Panc1 (cell line): ENCODE measurements at regions of chr11 and their contacts with region 1.

Region 1: GRCh38 chr11:64947208-64947814 is 11.6 kb upstream of the GPHA2 start:
- DNase-seq: no peak
- ATAC-seq: no peak
- H3K4me3 ChIP-seq: no peak overlapping the region
- H3K27ac ChIP-seq: no peak overlapping the region
- H3K4me1 ChIP-seq: no peaks in the 10 kb centered on the region
- H3K27me3 ChIP-seq: no peaks in the 10 kb centered on the region; the same call in 1 of the 2 replicates
- CTCF ChIP-seq: no peak

Region 2: GRCh38 chr11:64960719-64961118 is 13.4 kb after region 1 on chr11:
- CTCF ChIA-PET with region 1: interaction called, 3 read pairs
- POLR2A ChIA-PET with region 1: interaction called, 10 read pairs
- in situ Hi-C with region 1: no loop called
- intact Hi-C with region 1: no loop called
- DNase-seq: no peak
- ATAC-seq: no peak
- H3K4me3 ChIP-seq: no peak overlapping the region
- H3K27ac ChIP-seq: no peak overlapping the region
- H3K4me1 ChIP-seq: no peaks in the 10 kb centered on the region
- H3K27me3 ChIP-seq: no peaks in the 10 kb centered on the region; the same call in 1 of the 2 replicates
- CTCF ChIP-seq: no peak

Region 3: DNA sequence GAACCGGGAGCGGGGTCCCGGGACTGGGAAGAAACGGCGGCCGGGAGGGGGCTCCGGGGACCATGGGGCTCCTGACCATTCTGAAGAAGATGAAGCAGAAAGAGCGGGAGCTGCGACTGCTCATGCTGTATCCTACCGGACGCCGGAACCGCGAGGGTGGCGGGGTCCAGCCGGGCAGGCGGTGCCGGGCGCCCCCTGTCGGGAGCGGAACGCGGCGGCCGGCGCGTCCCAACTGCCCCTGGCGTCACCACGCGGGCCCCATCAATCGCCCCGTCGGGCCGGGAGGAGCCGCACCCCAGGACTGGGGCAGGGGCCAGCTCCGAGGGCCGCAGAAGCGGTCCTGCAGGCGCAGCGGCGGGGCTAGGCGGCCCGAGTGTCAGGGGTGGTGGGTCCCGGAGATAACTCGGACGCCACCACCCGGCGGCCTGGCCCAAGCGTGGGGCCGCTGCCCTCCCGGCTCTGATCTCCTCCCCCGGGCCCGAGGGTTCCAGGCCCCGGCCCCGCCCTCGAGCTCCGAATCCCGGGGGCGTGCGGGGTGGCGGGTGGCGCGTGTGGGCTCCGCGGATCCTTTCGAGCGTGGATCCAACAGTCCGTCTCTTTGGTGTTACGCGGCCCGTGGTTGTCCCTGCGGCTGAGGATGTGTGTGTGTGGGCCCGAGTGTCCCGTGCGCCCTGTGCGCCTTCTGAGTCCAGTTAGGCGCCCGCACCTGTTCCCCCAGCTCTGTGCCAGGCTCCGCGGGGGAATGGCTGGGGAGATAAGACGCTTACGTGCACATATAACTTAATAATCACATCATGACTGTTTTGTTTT is 67.0 kb after region 1 on chr11 and contains the start of gene ARL2:
- CTCF ChIA-PET with region 1: no interaction called
- POLR2A ChIA-PET with region 1: interaction called, 11 read pairs
- in situ Hi-C with region 1: no loop called
- intact Hi-C with region 1: no loop called
- DNase-seq: no peak
- ATAC-seq: peak; percentile 87
- H3K4me3 ChIP-seq: peak within 1 kb of the TSS; percentile 70 to 81
- H3K27ac ChIP-seq: peak within 1 kb of the TSS; percentile 92
- H3K4me1 ChIP-seq: peaks cover 7% of the 10 kb centered on the region; the same call in 1 of the 2 replicates
- H3K27me3 ChIP-seq: no peaks in the 10 kb centered on the region
- CTCF ChIP-seq: peak; percentile 98
- total RNA-seq, gene ARL2: 177 TPM